Transverse colon (tissue), 4 donors: ENCODE measurements at regions of chr9 and their contacts with region 1.

Region 1: GRCh38 chr9:104927912-104928740 is at the start of gene ABCA1:
- DNase-seq: peak; percentile 95
- H3K4me3 ChIP-seq: peak within 1 kb of the TSS; percentile 49 to 84 (median 72)
- H3K27ac ChIP-seq: peak within 1 kb of the TSS; percentile 89 to 95 (median 91)
- H3K4me1 ChIP-seq: peaks cover 5 to 38% (median 15%) of the 10 kb centered on the region in 4 donors
- H3K27me3 ChIP-seq: no peaks in the 10 kb centered on the region
- CTCF ChIP-seq: no peak
- EP300 ChIP-seq: no peak
- POLR2A ChIP-seq: peak; percentile 95
- total RNA-seq, gene ABCA1: 20.5 to 67.3 (median 60.5) TPM

Region 2: GRCh38 chr9:104850786-104851545 is 77.2 kb before region 1 on chr9:
- in situ Hi-C with region 1: no loop called
- intact Hi-C with region 1: no loop called
- DNase-seq: no peak
- H3K4me3 ChIP-seq: no peak overlapping the region
- H3K27ac ChIP-seq: no peak overlapping the region
- H3K4me1 ChIP-seq: peaks cover 0 to 14% (median 6%) of the 10 kb centered on the region in 4 donors
- H3K27me3 ChIP-seq: no peaks in the 10 kb centered on the region
- CTCF ChIP-seq: no peak
- EP300 ChIP-seq: no peak
- POLR2A ChIP-seq: no peak

Region 3: GRCh38 chr9:104879555-104880309 is 48.4 kb before region 1 on chr9:
- in situ Hi-C with region 1: no loop called
- intact Hi-C with region 1: loop called (anchors 1 kb)
- DNase-seq: no peak
- H3K4me3 ChIP-seq: no peak overlapping the region
- H3K27ac ChIP-seq: peak overlapping the region; percentile 40 to 61 (median 46)
- H3K4me1 ChIP-seq: peaks cover 0 to 13% (median 2%) of the 10 kb centered on the region in 4 donors
- H3K27me3 ChIP-seq: no peaks in the 10 kb centered on the region
- CTCF ChIP-seq: no peak
- EP300 ChIP-seq: no peak
- POLR2A ChIP-seq: no peak

Region 4: DNA sequence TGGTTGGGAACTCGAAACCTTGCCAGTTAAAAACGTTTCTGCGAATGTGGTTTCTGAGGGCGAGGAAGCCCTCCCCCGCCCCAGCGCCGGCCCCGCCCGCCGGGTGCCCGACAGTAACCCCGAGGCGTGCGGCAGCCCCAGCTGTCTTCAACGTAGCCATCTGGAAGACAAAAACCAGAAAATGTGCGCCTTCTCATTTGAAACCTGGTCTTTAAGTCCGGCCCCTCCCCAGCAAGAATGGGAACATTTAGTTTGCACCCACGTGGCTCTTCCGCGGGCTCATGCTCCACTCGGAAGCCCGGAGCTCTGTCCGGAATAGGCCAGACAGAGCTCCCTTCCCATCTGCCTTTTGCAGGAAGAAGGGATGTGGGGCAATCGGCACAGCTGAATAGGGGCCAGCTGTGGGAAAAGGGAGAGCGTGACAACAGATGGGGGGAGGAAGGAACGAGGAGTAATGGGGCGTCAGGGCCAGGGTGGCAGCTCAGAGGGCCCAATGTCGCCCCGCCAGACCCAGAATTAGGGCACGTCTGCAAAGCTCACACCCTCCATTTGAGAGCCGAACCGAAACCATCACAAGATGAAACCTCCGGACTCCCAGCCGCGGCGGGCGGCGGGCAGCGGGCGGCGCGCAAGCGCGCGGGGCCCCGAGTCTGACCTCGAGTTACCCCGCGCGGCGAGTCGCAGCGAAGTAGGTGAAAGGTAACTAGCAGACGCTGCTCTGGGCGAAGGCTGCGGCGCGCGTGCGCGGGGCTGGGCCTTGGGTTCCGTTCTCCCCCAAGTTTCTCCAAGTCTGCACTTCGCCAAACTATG is 63.2 kb after region 1 on chr9:
- in situ Hi-C with region 1: no loop called
- intact Hi-C with region 1: loop called (anchors 1 kb)
- DNase-seq: peak; percentile 95
- H3K4me3 ChIP-seq: peak overlapping the region; percentile 50 to 79 (median 61)
- H3K27ac ChIP-seq: peak overlapping the region; percentile 94 to 98 (median 97)
- H3K4me1 ChIP-seq: peaks cover 25 to 36% (median 33%) of the 10 kb centered on the region in 4 donors
- H3K27me3 ChIP-seq: no peaks in the 10 kb centered on the region
- CTCF ChIP-seq: no peak
- EP300 ChIP-seq: peak; percentile 70
- POLR2A ChIP-seq: peak; percentile 64

Region 5: GRCh38 chr9:105150991-105151685 is 223.0 kb after region 1 on chr9:
- in situ Hi-C with region 1: loop called (anchors 5 to 10 kb)
- intact Hi-C with region 1: loop called (anchors 2 kb)
- DNase-seq: no peak
- H3K4me3 ChIP-seq: no peak overlapping the region
- H3K27ac ChIP-seq: no peak overlapping the region
- H3K4me1 ChIP-seq: peaks cover 0 to 8% (median 5%) of the 10 kb centered on the region in 4 donors
- H3K27me3 ChIP-seq: no peaks in the 10 kb centered on the region
- CTCF ChIP-seq: no peak
- EP300 ChIP-seq: no peak
- POLR2A ChIP-seq: no peak

Region 6: GRCh38 chr9:105233873-105234272 is 305.7 kb after region 1 on chr9:
- in situ Hi-C with region 1: no loop called
- intact Hi-C with region 1: no loop called
- DNase-seq: no peak
- H3K4me3 ChIP-seq: no peak overlapping the region
- H3K27ac ChIP-seq: no peak overlapping the region
- H3K4me1 ChIP-seq: peaks cover 0 to 4% (median 0%) of the 10 kb centered on the region in 4 donors
- H3K27me3 ChIP-seq: no peaks in the 10 kb centered on the region
- CTCF ChIP-seq: no peak
- EP300 ChIP-seq: no peak
- POLR2A ChIP-seq: no peak

Region 7: GRCh38 chr9:105244003-105244733 is 316.0 kb after region 1 on chr9 and contains the start of gene SLC44A1:
- in situ Hi-C with region 1: loop called in 1 of 4 experiments (anchors 10 kb)
- intact Hi-C with region 1: no loop called
- DNase-seq: peak; percentile 98
- H3K4me3 ChIP-seq: peak within 1 kb of the TSS; percentile 65 to 99 (median 88)
- H3K27ac ChIP-seq: peak within 1 kb of the TSS; percentile 94 to 97 (median 95)
- H3K4me1 ChIP-seq: peaks cover 4 to 55% (median 28%) of the 10 kb centered on the region in 4 donors
- H3K27me3 ChIP-seq: no peaks in the 10 kb centered on the region
- CTCF ChIP-seq: no peak
- EP300 ChIP-seq: no peak
- POLR2A ChIP-seq: peak; percentile 85
- total RNA-seq, gene SLC44A1: 39.3 to 94.1 (median 58.3) TPM